Activated CD4-positive, alpha-beta T cell treated with anti-CD3 and anti-CD28 coated beads for 36 hours (primary cell): ENCODE measurements at regions of chr11 and their contacts with region 1.

Region 1: GRCh38 chr11:96342961-96343711 is at the start of gene MAML2:
- DNase-seq: peak; percentile 96
- ATAC-seq: peak; percentile 85
- H3K4me3 Mint-ChIP-seq: peak within 1 kb of the TSS; percentile 84
- H3K27ac Mint-ChIP-seq: peak within 1 kb of the TSS; percentile 95
- H3K4me1 Mint-ChIP-seq: peaks cover 26% of the 10 kb centered on the region
- H3K27me3 Mint-ChIP-seq: no peaks in the 10 kb centered on the region
- total RNA-seq, gene MAML2: 23.9 to 37.1 TPM

Region 2: GRCh38 chr11:95429376-95429907 is 913.7 kb before region 1 on chr11:
- CTCF ChIA-PET with region 1: no interaction called
- POLR2A ChIA-PET with region 1: no interaction called
- intact Hi-C with region 1: no loop called
- DNase-seq: no peak
- ATAC-seq: no peak
- H3K4me3 Mint-ChIP-seq: no peak overlapping the region
- H3K27ac Mint-ChIP-seq: no peak overlapping the region
- H3K4me1 Mint-ChIP-seq: peaks cover 2% of the 10 kb centered on the region
- H3K27me3 Mint-ChIP-seq: peaks cover 5% of the 10 kb centered on the region

Region 3: GRCh38 chr11:95790123-95790932 is 552.8 kb before region 1 on chr11 and contains the start of gene CEP57:
- CTCF ChIA-PET with region 1: interaction called, 8 read pairs
- POLR2A ChIA-PET with region 1: interaction called, 7 read pairs
- intact Hi-C with region 1: loop called in 1 of 2 experiments (anchors 1 kb)
- DNase-seq: peak; percentile 98
- ATAC-seq: peak; percentile 67
- H3K4me3 Mint-ChIP-seq: peak within 1 kb of the TSS; percentile 99
- H3K27ac Mint-ChIP-seq: peak within 1 kb of the TSS; percentile 100
- H3K4me1 Mint-ChIP-seq: peaks cover 53% of the 10 kb centered on the region
- H3K27me3 Mint-ChIP-seq: no peaks in the 10 kb centered on the region
- total RNA-seq, gene CEP57: 101 to 134 TPM

Region 4: GRCh38 chr11:96012086-96012824 is 330.9 kb before region 1 on chr11:
- CTCF ChIA-PET with region 1: interaction called, 12 read pairs
- POLR2A ChIA-PET with region 1: interaction called, 3 read pairs
- intact Hi-C with region 1: loop called (anchors 1 kb)
- DNase-seq: peak; percentile 66
- ATAC-seq: peak; percentile 71
- H3K4me3 Mint-ChIP-seq: peak overlapping the region; percentile 53
- H3K27ac Mint-ChIP-seq: peak overlapping the region; percentile 85
- H3K4me1 Mint-ChIP-seq: peaks cover 63% of the 10 kb centered on the region
- H3K27me3 Mint-ChIP-seq: no peaks in the 10 kb centered on the region

Region 5: GRCh38 chr11:96188243-96189006 is 154.7 kb before region 1 on chr11:
- CTCF ChIA-PET with region 1: interaction called, 15 read pairs
- POLR2A ChIA-PET with region 1: interaction called, 4 read pairs
- intact Hi-C with region 1: loop called in 1 of 2 experiments (anchors 2 kb)
- DNase-seq: peak; percentile 53
- ATAC-seq: peak; percentile 43
- H3K4me3 Mint-ChIP-seq: peak overlapping the region; percentile 53
- H3K27ac Mint-ChIP-seq: peak overlapping the region; percentile 91
- H3K4me1 Mint-ChIP-seq: peaks cover 90% of the 10 kb centered on the region
- H3K27me3 Mint-ChIP-seq: no peaks in the 10 kb centered on the region

Region 6: DNA sequence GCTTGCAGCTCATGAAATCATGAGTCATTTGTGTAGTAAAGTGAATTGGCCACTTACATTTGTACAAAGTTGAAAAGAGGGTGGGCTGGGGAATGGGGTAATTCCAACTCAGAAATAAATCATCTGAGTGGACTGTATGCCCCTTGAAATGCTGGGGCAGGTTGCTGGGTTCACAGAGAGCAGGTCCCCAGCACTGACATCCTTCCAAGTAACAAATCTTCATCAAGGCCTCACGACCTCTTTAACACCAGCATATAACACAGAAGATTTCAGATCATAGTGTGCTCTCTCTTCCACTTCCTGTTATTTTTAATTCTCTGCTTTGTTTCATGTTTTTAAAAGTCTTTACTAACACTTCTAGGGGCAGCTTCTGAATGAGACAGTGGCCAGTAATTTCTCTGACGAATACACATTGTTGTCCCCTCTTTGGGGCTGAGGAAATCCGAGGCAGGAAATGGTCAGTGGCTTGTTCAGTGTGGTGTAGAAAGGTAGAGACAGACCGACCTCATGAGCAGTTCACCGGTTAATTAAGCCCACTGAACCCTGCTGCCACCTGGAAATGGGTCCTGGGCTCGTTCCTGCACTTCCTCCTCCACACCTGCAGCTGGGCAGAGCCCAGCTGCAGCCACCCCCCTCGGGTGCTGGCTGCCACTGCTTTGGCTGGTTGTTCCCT is 127.9 kb before region 1 on chr11:
- CTCF ChIA-PET with region 1: interaction called, 11 read pairs
- POLR2A ChIA-PET with region 1: interaction called, 3 read pairs
- intact Hi-C with region 1: no loop called
- DNase-seq: peak; percentile 43
- ATAC-seq: peak; percentile 39
- H3K4me3 Mint-ChIP-seq: peak overlapping the region; percentile 53
- H3K27ac Mint-ChIP-seq: peak overlapping the region; percentile 98
- H3K4me1 Mint-ChIP-seq: peaks cover 87% of the 10 kb centered on the region
- H3K27me3 Mint-ChIP-seq: no peaks in the 10 kb centered on the region

Region 7: GRCh38 chr11:96254087-96254486 is 89.0 kb before region 1 on chr11:
- CTCF ChIA-PET with region 1: interaction called, 11 read pairs
- POLR2A ChIA-PET with region 1: interaction called, 3 read pairs
- intact Hi-C with region 1: loop called (anchors 1 to 5 kb)
- DNase-seq: peak; percentile 42
- ATAC-seq: peak; percentile 37
- H3K4me3 Mint-ChIP-seq: peak overlapping the region; percentile 53
- H3K27ac Mint-ChIP-seq: peak overlapping the region; percentile 88
- H3K4me1 Mint-ChIP-seq: peaks cover 89% of the 10 kb centered on the region
- H3K27me3 Mint-ChIP-seq: no peaks in the 10 kb centered on the region

Region 8: GRCh38 chr11:96331699-96332116 is 11.4 kb before region 1 on chr11:
- CTCF ChIA-PET with region 1: interaction called, 11 read pairs
- POLR2A ChIA-PET with region 1: interaction called, 3 read pairs
- intact Hi-C with region 1: loop called (anchors 1 kb)
- DNase-seq: no peak
- ATAC-seq: peak; percentile 31
- H3K4me3 Mint-ChIP-seq: no peak overlapping the region
- H3K27ac Mint-ChIP-seq: peak overlapping the region; percentile 23
- H3K4me1 Mint-ChIP-seq: peaks cover 85% of the 10 kb centered on the region
- H3K27me3 Mint-ChIP-seq: no peaks in the 10 kb centered on the region

Region 9: GRCh38 chr11:96607890-96608558 is 264.9 kb after region 1 on chr11:
- CTCF ChIA-PET with region 1: no interaction called
- POLR2A ChIA-PET with region 1: no interaction called
- intact Hi-C with region 1: no loop called
- DNase-seq: no peak
- ATAC-seq: no peak
- H3K4me3 Mint-ChIP-seq: no peak overlapping the region
- H3K27ac Mint-ChIP-seq: no peak overlapping the region
- H3K4me1 Mint-ChIP-seq: no peaks in the 10 kb centered on the region
- H3K27me3 Mint-ChIP-seq: no peaks in the 10 kb centered on the region

Region 10: GRCh38 chr11:96817488-96817887 is 474.4 kb after region 1 on chr11:
- CTCF ChIA-PET with region 1: no interaction called
- POLR2A ChIA-PET with region 1: no interaction called
- intact Hi-C with region 1: no loop called
- DNase-seq: no peak
- ATAC-seq: no peak
- H3K4me3 Mint-ChIP-seq: no peak overlapping the region
- H3K27ac Mint-ChIP-seq: no peak overlapping the region
- H3K4me1 Mint-ChIP-seq: no peaks in the 10 kb centered on the region
- H3K27me3 Mint-ChIP-seq: no peaks in the 10 kb centered on the region

Region 11: DNA sequence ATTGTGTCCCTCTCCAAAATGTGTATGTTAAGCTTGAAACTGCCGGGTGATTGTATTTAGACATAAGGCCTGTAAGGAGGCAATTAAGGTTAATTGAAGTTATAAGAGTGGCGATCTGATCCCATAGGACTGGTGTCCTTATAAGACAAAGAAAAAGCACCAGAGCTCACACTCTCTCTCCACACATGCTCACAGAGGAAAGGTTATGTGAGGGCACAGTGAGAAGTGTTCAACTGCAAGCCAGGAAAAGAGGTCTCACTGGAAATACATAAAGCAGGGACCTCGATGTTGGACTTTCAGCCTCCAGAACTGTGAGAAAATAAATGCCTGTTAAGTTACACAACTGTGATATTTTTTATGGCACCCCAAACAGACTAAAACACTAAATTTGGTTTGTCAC is 1443.8 kb after region 1 on chr11:
- CTCF ChIA-PET with region 1: no interaction called
- POLR2A ChIA-PET with region 1: no interaction called
- intact Hi-C with region 1: no loop called
- DNase-seq: no peak
- ATAC-seq: no peak
- H3K4me3 Mint-ChIP-seq: no peak overlapping the region
- H3K27ac Mint-ChIP-seq: no peak overlapping the region
- H3K4me1 Mint-ChIP-seq: no peaks in the 10 kb centered on the region
- H3K27me3 Mint-ChIP-seq: no peaks in the 10 kb centered on the region